Right cardiac atrium (tissue), 5 donors: ENCODE measurements at regions of chr15 and their contacts with region 1.

Region 1: GRCh38 chr15:78772738-78773137 is 38.5 kb downstream of the ADAMTS7 start:
- DNase-seq: peak in 2 of 3 donors; percentile 25 to 32
- ATAC-seq: no peak
- H3K4me3 ChIP-seq: no peak overlapping the region
- H3K27ac ChIP-seq: no peak overlapping the region
- H3K4me1 ChIP-seq: no peaks in the 10 kb centered on the region
- H3K27me3 ChIP-seq: no peaks in the 10 kb centered on the region

Region 2: DNA sequence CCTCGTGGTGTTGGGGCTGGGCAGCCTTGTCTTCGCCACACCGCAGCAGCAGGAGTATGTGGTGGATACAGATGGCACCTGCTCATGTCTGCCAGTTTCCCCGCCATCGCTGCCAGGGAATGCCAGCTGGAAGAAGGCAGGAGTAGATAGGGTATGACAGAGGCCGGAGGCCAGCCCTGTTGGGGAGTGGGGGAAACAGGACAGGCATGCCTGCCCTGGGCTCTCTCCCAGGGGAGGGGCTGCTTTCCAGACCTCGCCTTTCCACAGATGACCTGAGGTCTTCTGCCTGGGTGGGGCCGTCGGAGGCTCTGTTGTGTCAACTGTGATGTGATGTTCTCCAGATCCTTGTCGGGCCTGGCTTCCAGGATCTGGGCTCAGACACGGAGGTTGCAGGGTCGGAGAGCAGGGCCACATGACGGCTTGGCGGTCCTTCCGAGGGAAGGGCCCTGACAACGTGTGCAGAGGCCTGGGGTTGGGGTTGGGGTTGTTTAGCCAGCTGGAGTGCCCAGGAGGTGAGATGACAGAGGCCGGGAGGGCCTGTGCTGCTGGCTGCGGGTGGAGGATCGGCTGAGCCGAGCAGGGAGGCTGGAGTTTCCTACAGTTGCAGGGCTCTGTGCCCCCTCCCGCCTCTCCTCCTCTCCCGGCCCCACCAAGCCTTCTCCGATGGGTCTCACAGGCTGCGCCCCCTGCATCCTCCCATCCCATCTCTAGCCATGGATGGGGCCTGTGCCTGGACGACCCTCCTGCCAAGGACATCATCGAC is 797.2 kb before region 1 on chr15:
- intact Hi-C with region 1: loop called in 1 of 4 experiments (anchors 5 kb)
- DNase-seq: peak in 1 of 3 donors; percentile 67
- ATAC-seq: peak; percentile 13 to 41
- H3K4me3 ChIP-seq: no peak overlapping the region
- H3K27ac ChIP-seq: peak overlapping the region; percentile 15
- H3K4me1 ChIP-seq: peaks cover 11% of the 10 kb centered on the region
- H3K27me3 ChIP-seq: no peaks in the 10 kb centered on the region

Region 3: DNA sequence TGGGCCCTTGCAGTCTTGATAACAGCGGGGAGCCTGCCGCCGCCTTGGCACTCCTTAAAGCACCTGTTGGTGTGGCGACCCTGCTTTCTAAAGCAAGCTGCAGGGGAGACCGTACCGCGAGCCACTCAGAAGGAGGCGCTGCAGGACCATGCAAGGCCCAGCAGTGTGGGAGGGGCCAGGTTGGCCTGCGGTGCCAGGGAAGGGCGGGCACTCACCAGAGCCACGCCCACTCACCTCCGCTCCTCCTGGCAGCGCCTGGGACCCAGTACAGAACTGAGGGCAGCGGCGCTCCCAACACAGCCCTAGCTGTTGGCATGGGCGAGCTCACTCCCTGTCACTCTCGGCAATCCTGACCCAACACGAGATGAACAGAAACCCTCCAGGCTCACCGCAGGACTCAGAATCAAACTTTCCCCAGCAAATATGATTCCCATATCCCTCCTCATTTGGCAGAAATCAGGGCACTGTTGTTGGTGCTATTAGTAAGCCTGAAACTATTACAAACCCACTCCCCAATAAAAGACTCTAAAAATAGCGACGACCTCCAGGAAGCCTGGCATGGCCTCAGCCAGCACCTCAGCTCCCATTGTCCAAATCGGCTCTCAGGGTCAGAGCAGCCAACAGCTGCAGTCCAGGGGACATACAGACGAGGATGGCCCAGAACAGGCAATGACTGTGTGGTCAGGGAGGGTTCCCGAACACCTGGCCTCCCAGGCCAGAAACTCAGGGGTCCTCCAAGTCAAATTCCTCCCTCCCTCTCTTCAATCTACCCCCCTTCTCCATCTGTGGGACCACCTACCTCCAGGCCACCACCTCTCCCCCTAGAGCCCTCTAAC is 772.4 kb before region 1 on chr15:
- intact Hi-C with region 1: no loop called
- DNase-seq: peak; percentile 73 to 91 (median 88)
- ATAC-seq: peak; percentile 61 to 79
- H3K4me3 ChIP-seq: no peak overlapping the region
- H3K27ac ChIP-seq: no peak overlapping the region
- H3K4me1 ChIP-seq: peaks cover 3% of the 10 kb centered on the region
- H3K27me3 ChIP-seq: no peaks in the 10 kb centered on the region

Region 4: GRCh38 chr15:78691167-78691872 is 81.4 kb before region 1 on chr15:
- intact Hi-C with region 1: no loop called
- DNase-seq: no peak
- ATAC-seq: no peak
- H3K4me3 ChIP-seq: no peak overlapping the region
- H3K27ac ChIP-seq: no peak overlapping the region
- H3K4me1 ChIP-seq: no peaks in the 10 kb centered on the region
- H3K27me3 ChIP-seq: no peaks in the 10 kb centered on the region